Natural killer cell (primary cell): ENCODE measurements at regions of chr16 and their contacts with region 1.

Region 1: DNA sequence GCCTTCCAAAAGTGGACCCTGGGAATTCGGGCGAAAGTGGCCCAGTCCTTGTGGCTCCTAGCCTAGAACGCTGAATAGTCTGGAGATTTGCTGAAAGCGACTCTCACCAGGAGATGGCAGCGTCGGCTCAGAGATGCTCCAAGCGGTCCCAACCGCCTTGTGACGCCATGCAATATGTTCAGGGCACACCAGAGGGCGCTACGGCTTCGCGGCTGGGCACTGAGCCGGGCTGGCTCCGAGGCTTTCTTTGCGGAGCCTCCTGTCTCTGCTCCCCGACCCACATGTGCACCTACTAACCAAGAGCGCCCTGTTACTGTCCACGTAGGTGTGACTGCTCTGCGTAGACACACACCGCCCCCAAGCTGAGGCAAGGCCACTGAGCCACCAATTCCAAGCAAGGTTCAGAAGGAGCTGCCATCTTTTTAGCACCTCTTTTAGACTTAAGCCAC is 36.9 kb downstream of the SYCE1L start:
- DNase-seq: peak; percentile 86 to 94
- ATAC-seq: peak; percentile 99
- H3K4me3 ChIP-seq: no peak overlapping the region
- H3K4me3 Mint-ChIP-seq: no peak overlapping the region
- H3K27ac ChIP-seq: no peak overlapping the region
- H3K27ac Mint-ChIP-seq: peak overlapping the region in 1 of 2 donors; percentile 20
- H3K4me1 ChIP-seq: peaks cover 6% of the 10 kb centered on the region
- H3K4me1 Mint-ChIP-seq: peaks cover 6 to 7% of the 10 kb centered on the region in 2 donors
- H3K27me3 ChIP-seq: no peaks in the 10 kb centered on the region
- H3K27me3 Mint-ChIP-seq: peaks cover 8% of the 10 kb centered on the region in 2 donors
- CTCF ChIP-seq: peak; percentile 99

Region 2: GRCh38 chr16:77376358-77376757 is 140.3 kb after region 1 on chr16:
- intact Hi-C with region 1: loop called (anchors 1 kb)
- DNase-seq: peak in 1 of 2 donors; percentile 30
- ATAC-seq: peak in 1 of 3 donors; percentile 50
- H3K4me3 ChIP-seq: no peak overlapping the region
- H3K4me3 Mint-ChIP-seq: no peak overlapping the region
- H3K27ac ChIP-seq: no peak overlapping the region
- H3K27ac Mint-ChIP-seq: no peak overlapping the region
- H3K4me1 ChIP-seq: no peaks in the 10 kb centered on the region
- H3K4me1 Mint-ChIP-seq: no peaks in the 10 kb centered on the region
- H3K27me3 ChIP-seq: no peaks in the 10 kb centered on the region
- H3K27me3 Mint-ChIP-seq: peaks cover 6 to 12% of the 10 kb centered on the region in 2 donors
- CTCF ChIP-seq: no peak

Region 3: GRCh38 chr16:77584205-77584859 is 348.2 kb after region 1 on chr16:
- intact Hi-C with region 1: loop called (anchors 1 kb)
- DNase-seq: peak in 1 of 2 donors; percentile 69
- ATAC-seq: peak; percentile 68 to 76 (median 69)
- H3K4me3 ChIP-seq: no peak overlapping the region
- H3K4me3 Mint-ChIP-seq: no peak overlapping the region
- H3K27ac ChIP-seq: no peak overlapping the region
- H3K27ac Mint-ChIP-seq: no peak overlapping the region
- H3K4me1 ChIP-seq: peaks cover 3% of the 10 kb centered on the region
- H3K4me1 Mint-ChIP-seq: peaks cover 8% of the 10 kb centered on the region in 2 donors
- H3K27me3 ChIP-seq: peaks cover 4% of the 10 kb centered on the region
- H3K27me3 Mint-ChIP-seq: peaks cover 8 to 17% of the 10 kb centered on the region in 2 donors
- CTCF ChIP-seq: peak; percentile 84

Region 4: GRCh38 chr16:77617990-77618389 is 381.9 kb after region 1 on chr16:
- intact Hi-C with region 1: no loop called
- DNase-seq: no peak
- ATAC-seq: no peak
- H3K4me3 ChIP-seq: no peak overlapping the region
- H3K4me3 Mint-ChIP-seq: no peak overlapping the region
- H3K27ac ChIP-seq: no peak overlapping the region
- H3K27ac Mint-ChIP-seq: no peak overlapping the region
- H3K4me1 ChIP-seq: no peaks in the 10 kb centered on the region
- H3K4me1 Mint-ChIP-seq: no peaks in the 10 kb centered on the region
- H3K27me3 ChIP-seq: peaks cover 3% of the 10 kb centered on the region
- H3K27me3 Mint-ChIP-seq: peaks cover 13 to 42% of the 10 kb centered on the region in 2 donors
- CTCF ChIP-seq: no peak

Region 5: GRCh38 chr16:77971306-77972271 is 735.5 kb after region 1 on chr16:
- intact Hi-C with region 1: loop called (anchors 1 kb)
- DNase-seq: peak; percentile 65 to 82
- ATAC-seq: peak in 2 of 3 donors; percentile 56 to 70
- H3K4me3 ChIP-seq: no peak overlapping the region
- H3K4me3 Mint-ChIP-seq: no peak overlapping the region
- H3K27ac ChIP-seq: no peak overlapping the region
- H3K27ac Mint-ChIP-seq: no peak overlapping the region
- H3K4me1 ChIP-seq: no peaks in the 10 kb centered on the region
- H3K4me1 Mint-ChIP-seq: no peaks in the 10 kb centered on the region
- H3K27me3 ChIP-seq: no peaks in the 10 kb centered on the region
- H3K27me3 Mint-ChIP-seq: peaks cover 5 to 7% of the 10 kb centered on the region in 2 donors
- CTCF ChIP-seq: peak; percentile 68